Esophagus muscularis mucosa (tissue), 4 donors: ENCODE measurements at regions of chr7 and their contacts with region 1.

Region 1: DNA sequence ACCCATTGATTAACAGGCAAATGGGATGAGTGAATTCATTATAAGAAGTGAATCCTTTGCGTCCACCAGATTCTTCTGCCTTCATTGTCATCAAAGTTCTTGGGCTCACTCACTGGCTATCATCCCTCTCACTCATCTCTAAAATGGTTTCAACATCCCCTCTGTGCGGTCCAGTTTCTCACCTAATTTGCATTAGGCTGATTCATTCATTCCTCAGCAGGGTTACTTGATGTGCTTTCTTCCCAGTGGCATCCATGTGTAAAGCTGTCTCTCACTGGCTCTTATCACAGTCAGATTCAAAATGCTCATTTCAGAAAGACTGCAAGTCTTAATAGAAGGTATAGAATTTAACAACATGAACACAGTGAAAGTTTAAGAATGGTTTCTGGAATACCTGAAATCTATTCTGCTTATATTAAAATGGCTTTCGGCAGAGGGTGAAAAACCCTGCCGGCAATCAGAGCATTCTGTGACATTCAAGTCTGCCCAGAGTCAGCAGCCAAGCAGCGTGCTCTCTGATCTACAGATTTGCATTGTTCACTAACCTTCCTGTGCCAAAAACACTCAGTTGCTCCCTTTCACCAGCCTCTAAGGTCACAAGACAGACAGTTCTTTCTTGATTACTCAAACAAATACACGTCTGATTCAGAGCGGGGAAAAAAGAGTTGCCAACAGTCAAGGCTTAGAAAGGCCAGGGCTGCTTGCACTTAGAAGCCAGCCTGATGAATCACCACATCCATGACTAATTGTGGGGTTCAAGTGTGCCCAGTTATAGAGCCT is 106.7 kb downstream of the TES start:
- DNase-seq: no peak
- H3K4me3 ChIP-seq: peak overlapping the region in 2 of 4 donors; percentile 22 to 27
- H3K27ac ChIP-seq: peak overlapping the region; percentile 74 to 80 (median 78)
- H3K4me1 ChIP-seq: peaks cover 22 to 34% (median 32%) of the 10 kb centered on the region in 4 donors
- H3K27me3 ChIP-seq: no peaks in the 10 kb centered on the region
- CTCF ChIP-seq: no peak
- EP300 ChIP-seq: peak; percentile 18
- POLR2A ChIP-seq: no peak

Region 2: DNA sequence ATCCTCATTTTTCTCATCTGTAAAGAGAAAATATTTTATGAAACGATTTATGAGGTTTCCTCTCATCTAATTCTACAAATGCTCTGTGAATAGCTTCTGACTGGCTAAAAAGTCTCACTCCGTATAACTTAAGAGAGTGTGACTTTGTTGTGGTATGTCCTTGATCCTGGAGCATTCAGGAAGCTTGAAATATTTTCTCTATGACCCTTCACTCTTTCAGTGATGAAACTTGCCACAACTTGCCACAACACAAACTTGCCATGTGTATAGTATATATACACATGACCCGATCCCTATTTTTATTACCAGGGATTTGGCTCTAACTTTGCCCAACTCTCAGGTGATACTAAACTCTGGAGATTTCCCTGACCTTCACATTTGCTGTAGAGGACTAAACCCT is 32.6 kb before region 1 on chr7:
- intact Hi-C with region 1: no loop called
- DNase-seq: no peak
- H3K4me3 ChIP-seq: no peak overlapping the region
- H3K27ac ChIP-seq: no peak overlapping the region
- H3K4me1 ChIP-seq: peaks cover 0 to 15% (median 8%) of the 10 kb centered on the region in 4 donors
- H3K27me3 ChIP-seq: no peaks in the 10 kb centered on the region
- CTCF ChIP-seq: no peak
- EP300 ChIP-seq: no peak
- POLR2A ChIP-seq: no peak

Region 3: GRCh38 chr7:116438267-116438666 is 121.2 kb after region 1 on chr7:
- intact Hi-C with region 1: loop called (anchors 5 kb)
- DNase-seq: no peak
- H3K4me3 ChIP-seq: no peak overlapping the region
- H3K27ac ChIP-seq: no peak overlapping the region
- H3K4me1 ChIP-seq: peaks cover 5 to 34% (median 12%) of the 10 kb centered on the region in 4 donors
- H3K27me3 ChIP-seq: no peaks in the 10 kb centered on the region
- CTCF ChIP-seq: peak in 2 of 3 experiments; percentile 11 to 12
- EP300 ChIP-seq: no peak
- POLR2A ChIP-seq: no peak